Activated CD8-positive, alpha-beta T cell treated with anti-CD3 and anti-CD28 coated beads for 36 hours (primary cell): ENCODE measurements at regions of chr17 and their contacts with region 1.

Region 1: DNA sequence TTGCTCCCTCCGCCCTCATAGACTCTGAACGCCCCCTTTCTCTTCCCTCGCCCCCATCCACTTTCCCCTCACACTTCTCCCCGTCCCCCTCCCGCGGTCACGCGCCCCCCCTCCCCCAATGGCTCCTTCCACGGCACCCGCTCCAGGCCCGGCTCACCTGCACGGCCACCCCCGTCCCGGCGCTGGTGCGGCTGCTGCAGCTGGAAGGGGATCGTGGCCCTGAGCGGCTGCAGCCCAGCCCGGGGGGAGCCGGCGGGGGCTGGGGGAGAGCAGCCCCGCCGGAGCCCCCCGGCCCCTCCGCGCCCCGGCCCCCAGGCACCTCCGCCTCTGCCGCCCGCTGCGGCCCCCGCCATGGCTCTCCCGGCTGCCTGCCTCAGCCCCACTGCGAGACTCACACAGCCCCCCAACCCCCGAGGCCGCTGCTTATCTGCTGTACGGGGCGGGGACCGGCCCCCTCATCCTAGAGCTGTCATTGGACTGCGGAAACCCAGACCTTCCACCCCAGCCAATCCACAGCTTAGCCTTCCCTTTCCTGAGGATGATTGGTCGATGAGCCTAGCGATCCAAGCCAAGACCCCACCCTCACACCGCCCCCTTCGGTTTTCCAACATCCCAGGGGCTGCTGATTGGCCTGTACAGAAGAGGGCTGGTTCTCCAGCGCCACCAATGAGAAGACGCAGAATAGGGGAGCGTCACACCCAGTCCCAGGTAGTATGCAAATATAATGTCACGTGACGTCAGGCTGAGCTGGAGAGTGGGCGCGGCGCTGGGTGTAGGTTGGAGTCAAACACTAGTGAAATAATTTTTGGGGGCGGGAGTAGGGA is at the start of gene FAM117A:
- DNase-seq: peak; percentile 99
- ATAC-seq: peak; percentile 96
- H3K4me3 Mint-ChIP-seq: peak within 1 kb of the TSS; percentile 92
- H3K27ac Mint-ChIP-seq: peak within 1 kb of the TSS; percentile 88
- H3K4me1 Mint-ChIP-seq: peaks cover 49% of the 10 kb centered on the region
- H3K27me3 Mint-ChIP-seq: peaks cover 2% of the 10 kb centered on the region
- CTCF ChIP-seq: no peak
- total RNA-seq, gene FAM117A: 19.7 to 23.0 TPM

Region 2: GRCh38 chr17:49715717-49716279 is 48.1 kb before region 1 on chr17:
- CTCF ChIA-PET with region 1: interaction called, 34 read pairs
- POLR2A ChIA-PET with region 1: interaction called, 12 read pairs
- intact Hi-C with region 1: loop called (anchors 5 kb)
- DNase-seq: peak; percentile 81
- ATAC-seq: peak; percentile 56
- H3K4me3 Mint-ChIP-seq: peak overlapping the region; percentile 52
- H3K27ac Mint-ChIP-seq: peak overlapping the region; percentile 94
- H3K4me1 Mint-ChIP-seq: peaks cover 42% of the 10 kb centered on the region
- H3K27me3 Mint-ChIP-seq: no peaks in the 10 kb centered on the region
- CTCF ChIP-seq: no peak

Region 3: GRCh38 chr17:49739641-49740271 is 24.2 kb before region 1 on chr17:
- CTCF ChIA-PET with region 1: interaction called, 7 read pairs
- POLR2A ChIA-PET with region 1: interaction called, 25 read pairs
- intact Hi-C with region 1: no loop called
- DNase-seq: peak; percentile 95
- ATAC-seq: peak; percentile 93
- H3K4me3 Mint-ChIP-seq: peak overlapping the region; percentile 79
- H3K27ac Mint-ChIP-seq: peak overlapping the region; percentile 100
- H3K4me1 Mint-ChIP-seq: peaks cover 79% of the 10 kb centered on the region
- H3K27me3 Mint-ChIP-seq: no peaks in the 10 kb centered on the region
- CTCF ChIP-seq: no peak

Region 4: DNA sequence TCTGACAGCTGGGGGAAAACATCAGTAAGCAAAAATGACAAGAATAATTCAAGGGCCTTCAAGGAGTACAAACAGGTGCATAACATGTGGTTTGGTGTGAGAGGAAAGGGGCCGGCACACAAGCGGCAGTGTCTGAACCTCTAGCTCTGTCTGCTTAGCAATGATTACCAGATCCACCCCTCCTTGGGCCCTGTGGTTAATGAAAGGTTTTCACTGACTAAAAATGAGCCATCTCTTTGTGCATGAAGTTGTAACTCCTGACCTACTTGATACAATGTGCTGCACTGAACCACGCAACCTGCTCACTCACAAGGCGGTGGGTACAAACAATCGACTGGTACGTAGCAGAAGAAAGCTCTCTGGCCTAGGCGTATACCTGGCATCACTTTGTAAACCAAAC is 15.2 kb before region 1 on chr17:
- CTCF ChIA-PET with region 1: interaction called, 15 read pairs
- POLR2A ChIA-PET with region 1: interaction called, 58 read pairs
- intact Hi-C with region 1: no loop called
- DNase-seq: peak; percentile 89
- ATAC-seq: peak; percentile 88
- H3K4me3 Mint-ChIP-seq: peak overlapping the region; percentile 38
- H3K27ac Mint-ChIP-seq: peak overlapping the region; percentile 94
- H3K4me1 Mint-ChIP-seq: peaks cover 82% of the 10 kb centered on the region
- H3K27me3 Mint-ChIP-seq: no peaks in the 10 kb centered on the region
- CTCF ChIP-seq: no peak